Panc1 (cell line): ENCODE measurements at regions of chr6 and their contacts with region 1.

Region 1: DNA sequence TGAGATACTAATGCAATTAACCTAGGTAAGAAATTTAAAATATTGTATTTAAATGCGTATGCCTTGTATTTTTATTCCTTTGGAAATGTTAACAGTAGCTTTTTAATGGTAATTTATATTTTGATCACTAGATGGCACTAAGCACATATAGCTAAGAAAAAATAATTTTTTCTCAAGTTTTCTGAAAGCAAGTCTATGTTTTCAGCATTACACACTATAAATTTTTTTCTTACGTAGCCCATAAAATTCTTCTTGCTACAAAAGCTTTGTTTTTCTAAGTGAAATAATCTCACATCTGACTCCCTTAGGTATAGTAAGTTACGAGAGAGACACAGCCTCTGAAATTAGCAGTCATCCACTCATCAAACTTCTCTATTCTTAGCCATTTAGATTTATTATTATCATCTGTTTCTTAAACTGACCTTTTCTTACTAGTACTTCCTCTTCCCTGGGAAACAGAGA is 35.7 kb downstream of the TSPYL4 start:
- DNase-seq: no peak
- ATAC-seq: no peak
- H3K4me3 ChIP-seq: no peak overlapping the region
- H3K27ac ChIP-seq: no peak overlapping the region
- H3K4me1 ChIP-seq: no peaks in the 10 kb centered on the region
- H3K27me3 ChIP-seq: no peaks in the 10 kb centered on the region
- CTCF ChIP-seq: peak; percentile 71; the same call in 1 of the 2 replicates

Region 2: GRCh38 chr6:116016846-116017545 is 201.2 kb before region 1 on chr6:
- CTCF ChIA-PET with region 1: no interaction called
- POLR2A ChIA-PET with region 1: no interaction called
- in situ Hi-C with region 1: no loop called
- intact Hi-C with region 1: no loop called
- DNase-seq: no peak
- ATAC-seq: peak; percentile 52
- H3K4me3 ChIP-seq: peak overlapping the region in 1 of 2 experiments; percentile 1; a peak in 1 of 4 replicates
- H3K27ac ChIP-seq: no peak overlapping the region
- H3K4me1 ChIP-seq: no peaks in the 10 kb centered on the region
- H3K27me3 ChIP-seq: no peaks in the 10 kb centered on the region
- CTCF ChIP-seq: no peak

Region 3: DNA sequence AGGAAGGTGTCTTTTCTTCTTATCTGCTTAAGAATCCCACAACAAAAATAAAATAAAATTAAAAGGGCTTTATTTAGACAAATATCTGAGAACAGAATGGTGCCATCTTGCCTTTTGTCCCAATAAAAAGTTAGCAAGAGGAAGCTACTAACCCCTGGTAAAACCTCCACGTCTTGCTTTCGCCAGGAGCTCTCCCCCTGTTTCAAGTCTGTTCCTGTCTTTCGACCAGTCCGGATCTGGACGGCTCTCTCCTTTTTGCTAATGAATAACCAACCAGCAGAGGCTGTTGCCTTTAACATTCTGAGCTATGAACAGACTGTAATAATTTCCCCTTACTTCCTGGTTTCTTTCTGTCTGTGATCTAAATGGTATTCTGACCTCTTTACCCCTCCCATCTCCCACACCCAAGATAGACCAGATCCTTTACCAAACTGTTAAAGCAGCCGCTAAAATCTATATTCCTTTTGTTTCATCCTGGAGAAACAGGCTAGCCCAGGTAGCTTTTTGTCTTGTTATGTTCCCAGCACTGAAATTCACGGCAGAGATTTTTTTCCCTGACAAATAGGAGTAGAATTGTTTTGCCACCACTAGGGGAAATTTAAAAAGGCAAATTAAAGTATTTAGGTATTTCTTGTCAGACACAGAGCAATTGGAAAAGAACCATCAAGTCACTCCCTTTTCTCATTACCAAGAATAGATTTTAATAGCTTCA is 157.5 kb before region 1 on chr6 and contains the start of gene FRK:
- CTCF ChIA-PET with region 1: interaction called, 10 read pairs
- POLR2A ChIA-PET with region 1: no interaction called
- in situ Hi-C with region 1: no loop called
- intact Hi-C with region 1: no loop called
- DNase-seq: no peak
- ATAC-seq: peak; percentile 79
- H3K4me3 ChIP-seq: peak within 1 kb of the TSS; percentile 24 to 71
- H3K27ac ChIP-seq: peak within 1 kb of the TSS; percentile 49
- H3K4me1 ChIP-seq: peaks cover 5% of the 10 kb centered on the region; the same call in 1 of the 2 replicates
- H3K27me3 ChIP-seq: peaks cover 3% of the 10 kb centered on the region; the same call in 1 of the 2 replicates
- CTCF ChIP-seq: peak; percentile 37; the same call in 1 of the 2 replicates
- total RNA-seq, gene FRK: 2.5 TPM

Region 4: DNA sequence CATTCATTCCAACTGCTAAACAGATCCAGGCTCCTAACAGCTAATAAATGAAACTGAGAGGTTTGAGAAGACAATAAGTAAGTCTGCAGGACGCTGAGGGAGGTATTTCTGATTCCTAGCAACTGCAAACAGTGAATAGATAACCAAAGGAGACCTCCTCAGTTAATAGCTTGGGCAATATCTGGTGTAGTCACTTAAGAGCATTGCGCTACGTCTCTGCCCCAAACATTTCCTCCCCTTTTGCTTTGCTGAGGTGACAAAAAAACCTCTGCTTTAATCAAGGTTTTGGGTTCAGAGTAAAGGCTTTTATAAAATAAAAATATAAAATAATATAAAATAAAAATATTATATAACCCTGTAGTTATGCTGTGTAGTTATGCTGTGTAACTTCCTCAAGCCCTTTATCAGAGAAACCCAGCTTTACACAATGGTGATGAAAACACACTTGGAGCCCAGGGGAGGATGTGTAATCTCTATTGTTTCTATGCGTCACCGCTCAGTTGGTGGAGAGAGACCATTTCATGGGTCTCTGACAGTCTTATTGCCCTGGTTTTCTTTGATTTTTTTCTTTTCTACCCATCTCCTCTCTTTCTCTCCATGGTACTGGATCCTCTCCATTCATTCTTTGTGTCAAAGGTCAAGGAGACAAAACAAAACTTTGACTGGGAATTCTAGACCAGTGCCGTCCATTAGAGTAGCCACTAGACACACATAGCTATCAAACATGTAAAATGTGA is 274.3 kb after region 1 on chr6:
- CTCF ChIA-PET with region 1: no interaction called
- POLR2A ChIA-PET with region 1: no interaction called
- in situ Hi-C with region 1: no loop called
- intact Hi-C with region 1: no loop called
- DNase-seq: no peak
- ATAC-seq: no peak
- H3K4me3 ChIP-seq: no peak overlapping the region
- H3K27ac ChIP-seq: no peak overlapping the region
- H3K4me1 ChIP-seq: no peaks in the 10 kb centered on the region
- H3K27me3 ChIP-seq: no peaks in the 10 kb centered on the region
- CTCF ChIP-seq: no peak

Region 5: DNA sequence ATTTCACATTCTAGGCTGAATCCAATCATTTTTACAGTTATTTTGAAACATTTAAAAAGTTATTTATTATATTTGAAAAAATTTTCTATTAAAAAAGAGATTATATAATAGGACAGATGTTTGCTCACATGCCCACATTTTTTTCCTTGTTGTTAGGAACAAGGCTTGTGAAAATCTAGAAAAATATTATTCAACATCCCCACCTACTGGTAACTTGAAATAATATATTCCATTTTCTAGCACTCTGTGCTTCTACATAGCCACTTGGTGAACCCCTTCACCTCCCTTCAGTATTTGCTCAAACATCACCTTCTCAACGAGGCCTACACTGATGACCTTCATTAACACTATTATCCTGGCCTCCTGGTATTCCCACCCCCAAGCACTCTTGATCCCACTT is 629.0 kb after region 1 on chr6:
- CTCF ChIA-PET with region 1: no interaction called
- POLR2A ChIA-PET with region 1: no interaction called
- in situ Hi-C with region 1: no loop called
- intact Hi-C with region 1: no loop called
- DNase-seq: peak; percentile 24
- ATAC-seq: peak; percentile 92
- H3K4me3 ChIP-seq: no peak overlapping the region
- H3K27ac ChIP-seq: no peak overlapping the region
- H3K4me1 ChIP-seq: no peaks in the 10 kb centered on the region
- H3K27me3 ChIP-seq: peaks cover 6% of the 10 kb centered on the region; the same call in 1 of the 2 replicates
- CTCF ChIP-seq: peak; percentile 57